Natural killer cell (primary cell): ENCODE measurements at regions of chr6 and their contacts with region 1.

Region 1: DNA sequence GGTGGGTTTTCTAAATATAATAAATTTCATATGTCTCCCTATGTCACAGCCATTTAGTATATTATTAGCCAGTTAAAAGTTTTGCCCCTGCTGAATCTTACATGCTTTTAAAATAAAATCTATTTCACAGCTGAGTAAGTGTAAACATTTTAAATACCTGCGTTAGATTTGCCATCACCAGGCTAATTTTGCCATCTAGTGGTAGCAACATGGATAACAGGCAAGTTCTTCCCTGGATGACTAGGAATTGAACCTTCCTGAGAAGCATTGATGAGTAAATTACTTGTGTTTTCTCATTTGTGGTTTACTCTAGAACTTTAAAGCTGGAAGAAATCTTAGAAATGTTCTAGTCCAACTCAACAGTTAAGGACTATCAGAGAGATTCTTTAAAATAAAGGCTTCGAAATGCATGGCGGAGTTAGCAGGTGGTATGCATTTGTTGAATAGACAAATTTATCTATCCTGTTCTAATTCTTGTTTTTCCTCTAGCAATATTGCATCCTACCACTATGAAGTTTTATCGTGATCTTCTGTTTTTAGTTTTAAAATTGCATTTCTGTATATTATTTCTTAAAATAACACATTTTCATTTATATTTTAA is 2.6 kb downstream of the PRSS35 start:
- DNase-seq: peak in 1 of 2 donors; percentile 59
- ATAC-seq: peak; percentile 52 to 61 (median 54)
- H3K4me3 ChIP-seq: no peak overlapping the region
- H3K4me3 Mint-ChIP-seq: no peak overlapping the region
- H3K27ac ChIP-seq: no peak overlapping the region
- H3K27ac Mint-ChIP-seq: no peak overlapping the region
- H3K4me1 ChIP-seq: peaks cover 10% of the 10 kb centered on the region
- H3K4me1 Mint-ChIP-seq: peaks cover 10 to 17% of the 10 kb centered on the region in 2 donors
- H3K27me3 ChIP-seq: peaks cover 6% of the 10 kb centered on the region
- H3K27me3 Mint-ChIP-seq: peaks cover 29 to 56% of the 10 kb centered on the region in 2 donors
- CTCF ChIP-seq: peak; percentile 81

Region 2: DNA sequence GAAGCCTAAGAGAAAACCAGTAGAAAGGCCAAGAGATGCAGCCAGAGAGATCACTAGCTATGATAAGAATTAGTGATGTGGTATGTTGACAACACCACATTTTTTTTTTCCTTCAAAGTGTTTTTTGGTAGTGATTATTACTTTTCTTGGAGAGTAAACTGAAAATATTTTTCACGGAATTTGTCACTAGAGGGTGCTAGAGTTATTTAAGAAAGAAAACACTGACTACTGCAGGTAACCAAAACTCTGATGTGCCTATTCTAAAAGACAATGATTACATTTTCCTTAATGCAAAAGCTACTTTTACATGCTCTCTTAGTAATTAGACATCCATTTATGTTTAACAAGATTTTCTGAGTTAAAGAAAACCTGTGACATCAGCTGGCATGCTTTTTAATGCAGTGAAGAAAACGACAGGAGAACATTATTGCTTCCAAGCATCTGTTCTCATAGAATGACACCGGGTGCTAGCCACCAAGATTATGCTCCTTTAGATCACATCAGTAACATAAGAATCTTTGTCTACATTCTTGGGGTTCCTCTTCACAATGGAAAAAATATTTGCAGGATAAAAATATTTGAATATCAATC is 293.0 kb before region 1 on chr6:
- intact Hi-C with region 1: loop called (anchors 1 kb)
- DNase-seq: peak in 1 of 2 donors; percentile 50
- ATAC-seq: peak in 1 of 3 donors; percentile 44
- H3K4me3 ChIP-seq: no peak overlapping the region
- H3K4me3 Mint-ChIP-seq: no peak overlapping the region
- H3K27ac ChIP-seq: no peak overlapping the region
- H3K27ac Mint-ChIP-seq: no peak overlapping the region
- H3K4me1 ChIP-seq: no peaks in the 10 kb centered on the region
- H3K4me1 Mint-ChIP-seq: no peaks in the 10 kb centered on the region
- H3K27me3 ChIP-seq: no peaks in the 10 kb centered on the region
- H3K27me3 Mint-ChIP-seq: peaks cover 0 to 6% of the 10 kb centered on the region in 2 donors
- CTCF ChIP-seq: peak; percentile 70

Region 3: DNA sequence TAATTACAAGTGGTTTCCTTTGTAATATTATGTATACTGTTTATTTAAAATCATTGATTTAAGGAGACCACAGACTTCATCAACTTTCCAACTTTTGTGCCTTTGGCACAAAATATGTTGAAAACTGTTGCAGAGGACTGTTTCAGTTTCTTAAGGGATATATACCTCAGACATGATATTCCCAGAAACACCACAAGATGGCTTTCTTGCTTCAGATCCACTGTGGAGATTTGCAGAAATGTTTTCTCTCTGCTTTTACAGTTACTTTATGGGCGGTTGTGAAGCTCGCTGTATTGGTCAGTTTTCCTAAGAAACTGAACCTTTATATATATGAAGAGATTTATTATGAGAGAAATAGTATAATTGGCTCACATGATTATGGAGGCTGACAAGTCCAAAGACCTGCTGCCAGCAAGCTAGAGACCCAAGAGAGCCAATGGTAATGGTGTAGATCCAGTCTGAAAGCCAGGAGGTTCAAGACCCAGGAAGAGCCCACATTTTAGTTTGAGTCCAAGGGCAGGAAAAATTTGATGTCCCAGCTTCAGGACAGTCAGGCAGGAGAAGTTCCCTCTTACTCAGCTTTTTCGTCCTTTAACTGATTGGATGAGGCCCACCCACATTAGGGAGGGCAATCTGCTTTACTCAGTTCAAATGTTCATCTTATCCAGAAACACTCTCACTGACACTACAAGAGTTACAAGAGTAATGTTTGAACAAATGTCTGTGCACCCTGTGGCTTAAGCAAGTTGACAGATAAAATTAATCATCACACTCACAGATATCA is 96.9 kb before region 1 on chr6:
- intact Hi-C with region 1: loop called (anchors 5 kb)
- DNase-seq: peak in 1 of 2 donors; percentile 6
- ATAC-seq: peak in 1 of 3 donors; percentile 43
- H3K4me3 ChIP-seq: no peak overlapping the region
- H3K4me3 Mint-ChIP-seq: no peak overlapping the region
- H3K27ac ChIP-seq: no peak overlapping the region
- H3K27ac Mint-ChIP-seq: no peak overlapping the region
- H3K4me1 ChIP-seq: no peaks in the 10 kb centered on the region
- H3K4me1 Mint-ChIP-seq: no peaks in the 10 kb centered on the region
- H3K27me3 ChIP-seq: no peaks in the 10 kb centered on the region
- H3K27me3 Mint-ChIP-seq: no peaks in the 10 kb centered on the region
- CTCF ChIP-seq: no peak

Region 4: GRCh38 chr6:83702077-83702476 is 187.1 kb after region 1 on chr6:
- intact Hi-C with region 1: no loop called
- DNase-seq: no peak
- ATAC-seq: no peak
- H3K4me3 ChIP-seq: no peak overlapping the region
- H3K4me3 Mint-ChIP-seq: no peak overlapping the region
- H3K27ac ChIP-seq: no peak overlapping the region
- H3K27ac Mint-ChIP-seq: no peak overlapping the region
- H3K4me1 ChIP-seq: no peaks in the 10 kb centered on the region
- H3K4me1 Mint-ChIP-seq: no peaks in the 10 kb centered on the region
- H3K27me3 ChIP-seq: peaks cover 2% of the 10 kb centered on the region
- H3K27me3 Mint-ChIP-seq: peaks cover 6 to 13% of the 10 kb centered on the region in 2 donors
- CTCF ChIP-seq: no peak